ENCODE measurements at regions of chr21 and their contacts with region 1.

Region 1: DNA sequence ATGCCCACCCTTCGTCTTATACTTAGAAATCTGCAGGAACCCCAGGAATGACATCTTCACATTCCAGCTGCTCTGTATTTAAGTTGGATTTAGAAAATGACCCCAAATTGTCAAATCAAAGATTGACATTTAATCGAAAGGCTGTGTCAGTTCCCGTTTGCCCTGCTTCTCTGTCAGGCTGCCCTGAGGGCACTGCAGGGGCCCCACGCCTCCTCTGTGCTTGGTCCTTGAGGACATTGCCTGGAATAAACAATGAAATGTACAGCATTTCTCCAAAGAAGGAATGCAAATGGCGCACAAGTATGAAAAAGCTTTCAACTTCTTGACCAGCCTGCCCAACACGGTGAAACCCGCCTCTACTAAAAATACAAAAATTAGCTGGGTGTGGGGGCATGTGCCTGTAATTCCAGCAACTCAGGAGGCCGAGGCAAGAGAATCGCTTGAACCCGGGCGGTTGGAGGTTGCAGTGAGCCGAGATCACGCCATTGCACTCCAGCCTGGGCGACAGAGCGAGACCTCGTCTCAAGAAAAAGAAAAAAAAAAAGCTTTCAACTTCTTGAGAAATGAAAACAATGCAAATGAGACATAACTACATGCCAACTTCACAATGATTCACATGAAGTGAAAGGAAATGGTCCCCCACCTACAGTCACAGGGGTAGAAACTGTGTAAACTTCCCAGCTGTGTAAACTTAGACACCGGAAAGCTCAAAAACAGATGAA is 3.0 kb downstream of the TMPRSS3 start:
- DNase-seq: no peak
- H3K4me3 Mint-ChIP-seq: peak overlapping the region; percentile 3
- H3K27ac Mint-ChIP-seq: peak overlapping the region; percentile 65
- H3K4me1 Mint-ChIP-seq: peaks cover 64% of the 10 kb centered on the region
- H3K27me3 Mint-ChIP-seq: no peaks in the 10 kb centered on the region

Region 2: DNA sequence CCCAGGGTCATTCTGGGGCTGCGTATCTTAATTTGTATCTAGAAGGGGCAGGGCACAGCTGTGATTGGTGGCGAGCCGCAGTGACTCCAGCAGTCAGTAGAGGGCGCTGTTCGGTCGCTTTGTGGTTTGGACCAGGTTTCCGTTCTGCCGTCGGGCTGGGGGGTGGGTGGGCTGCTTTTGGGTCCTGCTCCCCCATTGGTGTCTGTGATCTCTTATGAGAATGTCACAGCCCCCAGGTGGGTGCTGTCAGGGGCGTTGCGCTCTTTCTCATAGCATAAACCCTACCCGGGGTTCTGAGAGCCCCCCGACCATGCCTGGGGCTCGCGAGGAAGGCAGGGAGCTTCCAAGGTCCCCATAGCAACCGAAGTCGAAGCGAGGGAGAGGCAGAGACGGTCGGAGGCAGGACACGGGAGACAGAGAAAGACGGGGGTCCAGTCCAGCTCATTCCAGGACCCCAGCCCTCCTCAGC is 83.1 kb before region 1 on chr21:
- CTCF ChIA-PET with region 1: no interaction called
- POLR2A ChIA-PET with region 1: no interaction called
- DNase-seq: peak; percentile 76
- H3K4me3 Mint-ChIP-seq: no peak overlapping the region
- H3K27ac Mint-ChIP-seq: no peak overlapping the region
- H3K4me1 Mint-ChIP-seq: peaks cover 3% of the 10 kb centered on the region
- H3K27me3 Mint-ChIP-seq: peaks cover 16% of the 10 kb centered on the region

Region 3: GRCh38 chr21:42381334-42381984 is 11.4 kb before region 1 on chr21:
- CTCF ChIA-PET with region 1: interaction called, 15 read pairs
- POLR2A ChIA-PET with region 1: interaction called, 3 read pairs
- DNase-seq: peak; percentile 60
- H3K4me3 Mint-ChIP-seq: no peak overlapping the region
- H3K27ac Mint-ChIP-seq: no peak overlapping the region
- H3K4me1 Mint-ChIP-seq: peaks cover 24% of the 10 kb centered on the region
- H3K27me3 Mint-ChIP-seq: no peaks in the 10 kb centered on the region

Region 4: DNA sequence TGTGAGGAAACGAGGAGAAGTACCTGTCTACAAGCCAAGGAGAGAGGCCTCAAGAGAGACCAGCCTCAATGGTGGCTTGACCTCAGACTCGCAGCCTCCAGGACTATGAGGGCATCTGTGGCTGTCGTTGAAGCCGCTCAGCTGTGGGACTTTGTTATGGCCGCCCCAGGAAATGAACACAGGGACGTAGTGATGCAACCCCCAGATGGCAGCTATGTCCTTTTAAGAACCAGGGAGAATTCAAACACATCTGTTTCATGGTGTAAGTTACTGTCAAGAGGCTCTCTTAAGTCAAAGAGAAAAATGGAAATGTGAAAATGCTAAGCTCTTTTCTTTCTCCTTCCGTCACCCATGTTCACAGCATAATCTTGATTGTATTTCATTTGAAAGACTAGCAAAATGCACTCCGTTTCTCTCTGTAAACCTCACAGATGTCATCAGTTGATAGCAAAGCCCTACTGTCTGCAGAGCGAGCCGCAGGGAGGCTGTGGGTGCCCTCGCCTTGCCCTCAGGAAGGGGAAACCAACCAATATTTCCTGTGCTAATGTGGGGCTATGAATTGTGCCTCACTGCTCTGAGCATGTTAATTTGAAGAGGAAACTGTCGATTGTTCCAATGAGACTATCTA is 32.1 kb after region 1 on chr21:
- CTCF ChIA-PET with region 1: interaction called, 3 read pairs
- POLR2A ChIA-PET with region 1: interaction called, 14 read pairs
- DNase-seq: peak; percentile 90
- H3K4me3 Mint-ChIP-seq: peak overlapping the region; percentile 55
- H3K27ac Mint-ChIP-seq: peak overlapping the region; percentile 85
- H3K4me1 Mint-ChIP-seq: peaks cover 71% of the 10 kb centered on the region
- H3K27me3 Mint-ChIP-seq: no peaks in the 10 kb centered on the region